AG04450 (cell line): ENCODE measurements at regions of chr6 and their contacts with region 1.

Region 1: GRCh38 chr6:75208298-75209183 is 2.7 kb upstream of the COL12A1 start:
- DNase-seq: peak; percentile 64
- H3K4me3 ChIP-seq: peak overlapping the region; percentile 41; the same call in 1 of the 2 replicates
- H3K27ac ChIP-seq: peak overlapping the region; percentile 61
- H3K27me3 ChIP-seq: no peaks in the 10 kb centered on the region
- CTCF ChIP-seq: peak; percentile 94

Region 2: GRCh38 chr6:73732845-73733675 is 1475.5 kb before region 1 on chr6:
- CTCF ChIA-PET with region 1: interaction called, 139 read pairs
- POLR2A ChIA-PET with region 1: no interaction called
- DNase-seq: peak; percentile 53
- H3K4me3 ChIP-seq: no peak overlapping the region
- H3K27ac ChIP-seq: no peak overlapping the region
- H3K27me3 ChIP-seq: no peaks in the 10 kb centered on the region
- CTCF ChIP-seq: peak; percentile 93

Region 3: GRCh38 chr6:73854998-73855718 is 1353.4 kb before region 1 on chr6:
- CTCF ChIA-PET with region 1: interaction called, 56 read pairs
- POLR2A ChIA-PET with region 1: interaction called, 3 read pairs
- DNase-seq: peak; percentile 48
- H3K4me3 ChIP-seq: no peak overlapping the region
- H3K27ac ChIP-seq: no peak overlapping the region
- H3K27me3 ChIP-seq: no peaks in the 10 kb centered on the region
- CTCF ChIP-seq: peak; percentile 73

Region 4: GRCh38 chr6:74404366-74404765 is 804.2 kb before region 1 on chr6:
- CTCF ChIA-PET with region 1: interaction called, 71 read pairs
- POLR2A ChIA-PET with region 1: no interaction called
- DNase-seq: no peak
- H3K4me3 ChIP-seq: no peak overlapping the region
- H3K27ac ChIP-seq: no peak overlapping the region
- H3K27me3 ChIP-seq: no peaks in the 10 kb centered on the region
- CTCF ChIP-seq: no peak

Region 5: GRCh38 chr6:74979055-74979766 is 229.3 kb before region 1 on chr6:
- CTCF ChIA-PET with region 1: no interaction called
- POLR2A ChIA-PET with region 1: no interaction called
- DNase-seq: no peak
- H3K4me3 ChIP-seq: no peak overlapping the region
- H3K27ac ChIP-seq: no peak overlapping the region
- H3K27me3 ChIP-seq: no peaks in the 10 kb centered on the region
- CTCF ChIP-seq: no peak

Region 6: DNA sequence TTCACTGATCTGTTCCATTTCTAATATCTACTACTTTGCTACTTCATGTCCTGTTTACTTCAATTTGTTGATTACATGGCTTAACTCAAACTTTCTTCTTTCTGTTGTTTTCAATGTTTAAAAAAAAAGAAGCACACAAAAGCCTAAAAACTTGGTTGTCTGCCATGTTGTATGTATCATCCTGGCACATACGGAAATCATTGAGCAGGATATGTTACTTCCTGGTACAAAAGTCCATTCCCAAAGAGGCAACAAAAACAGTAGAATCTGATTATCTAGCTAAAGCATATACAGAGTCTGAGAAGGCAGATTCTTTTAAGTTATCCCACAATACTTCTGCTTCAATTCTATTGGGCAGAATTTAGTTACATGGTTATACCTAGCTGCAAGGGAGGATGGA is 11.8 kb after region 1 on chr6:
- CTCF ChIA-PET with region 1: interaction called, 38 read pairs
- POLR2A ChIA-PET with region 1: no interaction called
- DNase-seq: no peak
- H3K4me3 ChIP-seq: no peak overlapping the region
- H3K27ac ChIP-seq: no peak overlapping the region
- H3K27me3 ChIP-seq: no peaks in the 10 kb centered on the region
- CTCF ChIP-seq: no peak

Region 7: GRCh38 chr6:75386053-75386770 is 177.7 kb after region 1 on chr6:
- CTCF ChIA-PET with region 1: no interaction called
- POLR2A ChIA-PET with region 1: no interaction called
- DNase-seq: no peak
- H3K4me3 ChIP-seq: no peak overlapping the region
- H3K27ac ChIP-seq: no peak overlapping the region
- H3K27me3 ChIP-seq: no peaks in the 10 kb centered on the region
- CTCF ChIP-seq: no peak